GM10248 (cell line): ENCODE measurements at regions of chr1 and their contacts with region 1.

Region 1: DNA sequence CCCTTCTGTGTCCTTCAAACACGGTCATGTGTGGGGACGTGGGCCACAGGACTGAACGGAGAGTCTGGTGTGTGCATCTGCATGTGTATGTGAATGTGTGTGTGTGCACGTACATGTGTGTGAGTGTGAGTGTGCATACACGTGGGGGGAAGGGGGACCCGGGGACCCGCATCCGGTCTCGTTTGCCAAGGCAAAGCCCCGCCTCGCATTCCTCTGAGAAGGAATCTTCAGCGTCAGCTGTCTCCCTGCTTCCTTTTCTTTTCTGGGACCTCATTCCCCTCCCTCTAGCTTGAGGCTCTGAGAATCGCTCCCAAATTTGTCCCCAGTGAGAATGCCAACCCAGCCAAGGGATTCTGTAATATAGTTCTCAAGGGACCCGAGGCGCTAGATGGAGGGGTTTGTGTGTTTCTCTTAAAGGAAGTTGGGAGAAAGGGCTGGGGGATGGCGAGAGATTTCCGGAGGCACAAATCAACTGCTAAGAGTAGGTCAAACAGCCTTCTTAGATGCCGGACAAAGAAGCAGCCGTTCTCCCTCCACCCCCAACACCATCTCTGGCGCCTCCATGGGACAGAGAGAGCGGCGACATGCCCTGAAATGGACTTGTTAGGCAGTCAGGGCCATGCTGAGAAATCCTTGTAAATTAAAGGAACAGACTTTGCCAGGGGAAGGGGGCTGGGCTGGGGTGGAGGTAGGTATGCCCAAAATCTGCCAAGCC is 6.6 kb downstream of the IFFO2 start:
- DNase-seq: peak; percentile 59
- CTCF ChIP-seq: peak; percentile 47

Region 2: DNA sequence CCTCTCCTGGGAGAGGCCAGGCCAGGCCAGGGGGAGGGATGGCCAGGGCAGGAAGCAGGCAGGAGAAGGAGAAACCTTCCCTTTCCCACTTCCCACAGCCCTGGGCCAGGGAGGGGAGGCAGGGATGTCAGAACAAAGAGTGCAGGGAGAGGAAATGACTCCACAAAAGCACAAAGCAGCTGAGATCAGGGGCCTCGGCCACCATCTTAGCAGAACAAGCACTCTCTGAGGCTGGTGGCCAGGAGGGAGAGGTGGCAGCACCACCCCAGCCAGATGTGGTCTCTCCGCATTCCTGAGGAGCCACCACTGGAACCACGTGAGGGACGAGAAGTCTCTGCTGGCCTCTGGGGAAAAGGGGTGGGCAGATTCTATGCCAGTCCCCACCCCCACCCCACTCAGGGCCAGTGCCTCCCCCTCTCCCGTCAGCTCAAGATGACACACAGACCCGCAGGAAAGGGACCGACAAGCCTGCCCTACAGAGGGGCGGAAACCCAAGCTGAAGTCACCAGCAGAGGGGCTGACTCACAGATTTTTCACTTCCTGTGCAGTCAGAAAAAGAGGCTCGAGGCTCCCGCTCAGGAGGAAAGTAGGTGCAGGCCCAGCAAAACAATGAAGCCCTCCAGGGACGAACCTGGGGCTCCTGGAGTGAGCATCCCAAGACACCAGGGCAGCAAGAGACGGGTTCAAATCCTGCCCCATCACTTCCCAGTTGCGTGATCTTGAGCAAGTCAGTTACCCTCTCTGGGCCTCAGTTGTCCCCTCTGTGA is 23.3 kb before region 1 on chr1:
- CTCF ChIA-PET with region 1: interaction called, 5 read pairs
- POLR2A ChIA-PET with region 1: interaction called, 13 read pairs
- DNase-seq: peak; percentile 93
- CTCF ChIP-seq: no peak

Region 3: GRCh38 chr1:18965206-18966173 is 15.6 kb after region 1 on chr1:
- CTCF ChIA-PET with region 1: interaction called, 10 read pairs
- POLR2A ChIA-PET with region 1: no interaction called
- DNase-seq: peak; percentile 48
- CTCF ChIP-seq: no peak